ENCODE measurements at regions of chr16 and their contacts with region 1.

Region 1: GRCh38 chr16:4624015-4624826 is at the start of gene MGRN1:
- DNase-seq: peak; percentile 96
- ATAC-seq: peak; percentile 87
- H3K4me3 Mint-ChIP-seq: peak within 1 kb of the TSS; percentile 89
- H3K27ac Mint-ChIP-seq: peak within 1 kb of the TSS; percentile 98
- H3K4me1 Mint-ChIP-seq: peaks cover 31% of the 10 kb centered on the region
- H3K27me3 Mint-ChIP-seq: no peaks in the 10 kb centered on the region
- total RNA-seq, gene MGRN1: 76.9 to 92.1 TPM

Region 2: GRCh38 chr16:4561596-4561995 is 62.6 kb before region 1 on chr16:
- CTCF ChIA-PET with region 1: no interaction called
- DNase-seq: no peak
- ATAC-seq: no peak
- H3K4me3 Mint-ChIP-seq: no peak overlapping the region
- H3K27ac Mint-ChIP-seq: no peak overlapping the region
- H3K4me1 Mint-ChIP-seq: peaks cover 8% of the 10 kb centered on the region
- H3K27me3 Mint-ChIP-seq: peaks cover 3% of the 10 kb centered on the region

Region 3: DNA sequence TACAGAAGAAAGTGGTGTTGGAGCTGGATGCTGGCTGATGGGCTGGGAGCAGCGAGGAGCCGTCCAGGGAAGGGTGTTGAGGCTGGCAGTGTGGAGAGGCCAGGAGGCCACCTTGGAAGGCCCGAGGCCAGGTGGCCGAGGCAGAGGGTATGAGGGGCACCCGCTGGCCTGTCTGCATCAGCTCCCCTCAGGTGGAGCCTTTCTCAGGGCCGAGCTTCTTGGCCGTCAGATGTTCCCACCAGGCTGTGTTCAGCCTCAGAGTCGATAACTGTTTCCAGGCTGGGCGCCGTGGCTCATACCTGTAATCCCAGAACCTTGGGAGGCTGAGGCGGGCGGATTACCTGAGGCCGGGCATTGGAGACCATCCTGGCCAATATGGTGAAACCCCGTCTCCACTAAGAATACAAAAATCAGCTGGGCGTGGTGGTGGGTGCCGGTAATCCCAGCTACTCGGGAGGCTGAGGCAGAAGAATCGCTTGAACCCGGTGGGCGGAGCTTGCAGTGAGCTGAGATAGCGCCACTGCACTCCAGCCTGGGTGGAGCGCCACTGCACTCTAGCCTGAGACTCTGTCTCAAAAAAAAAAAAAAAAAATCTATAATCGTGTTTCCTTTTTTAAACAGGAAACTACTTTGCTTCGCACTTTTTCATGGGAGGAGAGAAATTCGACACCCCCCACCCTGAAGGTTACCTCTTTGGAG is 25.7 kb after region 1 on chr16:
- CTCF ChIA-PET with region 1: interaction called, 19 read pairs
- DNase-seq: no peak
- ATAC-seq: peak; percentile 22
- H3K4me3 Mint-ChIP-seq: no peak overlapping the region
- H3K27ac Mint-ChIP-seq: peak overlapping the region; percentile 58
- H3K4me1 Mint-ChIP-seq: peaks cover 15% of the 10 kb centered on the region
- H3K27me3 Mint-ChIP-seq: peaks cover 4% of the 10 kb centered on the region

Region 4: GRCh38 chr16:4693296-4693955 is 69.2 kb after region 1 on chr16 and contains the start of gene NUDT16L1:
- CTCF ChIA-PET with region 1: interaction called, 12 read pairs
- DNase-seq: peak; percentile 97
- ATAC-seq: peak; percentile 95
- H3K4me3 Mint-ChIP-seq: peak within 1 kb of the TSS; percentile 79
- H3K27ac Mint-ChIP-seq: peak within 1 kb of the TSS; percentile 82
- H3K4me1 Mint-ChIP-seq: peaks cover 17% of the 10 kb centered on the region
- H3K27me3 Mint-ChIP-seq: no peaks in the 10 kb centered on the region
- total RNA-seq, gene NUDT16L1: 31.6 to 35.6 TPM

Region 5: GRCh38 chr16:4734063-4734729 is 110.0 kb after region 1 on chr16 and contains the starts of genes ANKS3 and DNAAF8:
- CTCF ChIA-PET with region 1: interaction called, 10 read pairs
- DNase-seq: peak; percentile 88
- ATAC-seq: peak; percentile 85
- H3K4me3 Mint-ChIP-seq: peak within 1 kb of the TSS; percentile 85
- H3K27ac Mint-ChIP-seq: peak within 1 kb of the TSS; percentile 86
- H3K4me1 Mint-ChIP-seq: peaks cover 22% of the 10 kb centered on the region
- H3K27me3 Mint-ChIP-seq: no peaks in the 10 kb centered on the region
- total RNA-seq, gene ANKS3: 16.2 to 17.1 TPM
- total RNA-seq, gene DNAAF8: 0.30 TPM in 1 of 2 experiments, not detected in the other

Region 6: DNA sequence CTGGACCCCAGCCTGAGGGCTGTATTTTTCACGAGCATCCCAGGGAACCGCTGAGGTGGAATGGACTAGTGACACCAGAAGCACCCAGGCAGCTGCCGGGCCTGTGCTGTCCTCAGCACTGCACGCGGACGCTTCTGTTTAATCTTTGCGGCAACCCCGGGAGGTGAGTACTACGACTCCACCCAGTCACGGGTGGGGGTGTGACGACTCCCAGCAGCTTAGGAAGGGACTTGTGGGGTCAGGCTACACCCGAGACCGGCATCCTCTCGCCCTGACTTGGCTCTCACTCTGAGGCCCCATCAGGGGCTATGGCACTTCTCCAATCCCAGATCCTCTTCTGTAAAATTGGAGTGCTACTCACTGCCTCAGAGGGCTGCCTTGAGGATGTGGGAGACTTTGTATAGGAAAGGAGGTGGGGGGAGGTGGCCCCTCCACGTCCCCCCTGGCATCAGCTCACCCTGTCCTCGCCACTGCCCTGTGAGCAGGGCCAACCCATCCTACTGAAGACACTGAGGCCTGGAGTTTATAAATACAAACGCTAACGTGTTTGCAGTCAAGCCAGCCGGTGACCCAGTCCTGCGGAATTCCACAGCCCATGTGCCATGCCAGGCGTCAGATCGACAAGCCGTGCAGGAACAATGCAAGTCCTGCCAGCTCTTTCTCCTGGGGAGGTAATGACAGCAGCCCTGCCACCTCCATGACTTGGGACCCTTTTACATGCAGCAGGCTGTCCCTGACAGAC is 268.3 kb after region 1 on chr16:
- CTCF ChIA-PET with region 1: no interaction called
- DNase-seq: no peak
- ATAC-seq: no peak
- H3K4me3 Mint-ChIP-seq: no peak overlapping the region
- H3K27ac Mint-ChIP-seq: no peak overlapping the region
- H3K4me1 Mint-ChIP-seq: no peaks in the 10 kb centered on the region
- H3K27me3 Mint-ChIP-seq: no peaks in the 10 kb centered on the region